SK-N-SH (cell line): ENCODE measurements at regions of chr7 and their contacts with region 1.

Region 1: DNA sequence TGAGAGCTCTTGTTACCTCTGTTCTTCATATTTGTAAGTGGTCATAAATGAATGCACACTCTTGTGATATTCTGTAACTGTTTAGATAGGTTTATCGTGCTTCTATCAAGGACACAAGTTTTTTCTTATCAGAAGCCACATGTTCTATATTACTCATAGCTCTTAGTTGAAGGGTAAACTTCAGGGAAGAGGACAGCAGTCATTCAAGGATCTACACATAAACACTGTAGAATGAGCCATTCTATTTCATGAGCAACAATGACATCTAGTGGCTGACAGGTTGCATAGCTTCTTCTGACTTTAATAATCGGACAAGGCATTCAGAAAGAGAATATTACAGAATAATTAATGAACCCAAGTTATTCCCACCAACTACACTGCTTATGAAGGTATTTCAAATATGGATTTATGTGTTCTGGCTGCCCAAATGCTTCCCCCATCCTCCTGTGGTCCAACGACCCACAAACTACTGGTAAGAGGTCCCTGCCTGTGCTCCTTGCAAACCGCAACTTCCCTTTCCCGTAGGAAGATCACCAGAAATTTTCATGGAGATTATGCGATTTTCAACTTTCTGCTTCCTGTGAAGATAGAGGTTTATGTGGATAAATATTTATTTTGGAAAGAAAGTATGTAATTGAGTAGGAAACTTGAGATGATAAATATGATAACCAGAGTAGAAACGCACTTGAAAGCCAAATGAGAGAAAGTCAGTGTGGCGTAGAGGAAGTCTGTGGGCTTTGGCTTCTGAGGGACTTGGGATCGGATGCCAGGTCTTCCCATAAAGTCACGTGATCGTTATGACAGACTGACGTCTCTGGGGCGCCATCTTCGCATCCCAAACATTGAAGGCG is 16.8 kb upstream of the ABCB5 start:
- DNase-seq: peak; percentile 59
- H3K4me3 ChIP-seq: no peak overlapping the region; a peak in 1 of 4 replicates
- H3K27ac ChIP-seq: no peak overlapping the region
- H3K4me1 ChIP-seq: peaks cover 0 to 2% of the 10 kb centered on the region in 2 experiments; a peak in 2 of 4 replicates
- H3K27me3 ChIP-seq: no peaks in the 10 kb centered on the region
- CTCF ChIP-seq: peak; percentile 97
- EP300 ChIP-seq: no peak; a peak in 1 of 4 replicates
- RAD21 ChIP-seq: peak; percentile 100

Region 2: GRCh38 chr7:19747740-19748339 is 850.8 kb before region 1 on chr7:
- CTCF ChIA-PET with region 1: interaction called, 77 read pairs
- POLR2A ChIA-PET with region 1: no interaction called
- DNase-seq: peak; percentile 47
- H3K4me3 ChIP-seq: no peak overlapping the region
- H3K27ac ChIP-seq: no peak overlapping the region
- H3K4me1 ChIP-seq: no peaks in the 10 kb centered on the region
- H3K27me3 ChIP-seq: no peaks in the 10 kb centered on the region; the same call in 1 of the 2 replicates
- CTCF ChIP-seq: peak; percentile 86
- EP300 ChIP-seq: no peak
- RAD21 ChIP-seq: peak; percentile 78

Region 3: GRCh38 chr7:20158684-20159083 is 440.0 kb before region 1 on chr7:
- CTCF ChIA-PET with region 1: interaction called, 56 read pairs
- POLR2A ChIA-PET with region 1: no interaction called
- DNase-seq: no peak
- H3K4me3 ChIP-seq: no peak overlapping the region
- H3K27ac ChIP-seq: no peak overlapping the region
- H3K4me1 ChIP-seq: no peaks in the 10 kb centered on the region
- H3K27me3 ChIP-seq: no peaks in the 10 kb centered on the region
- CTCF ChIP-seq: peak; percentile 60
- EP300 ChIP-seq: no peak
- RAD21 ChIP-seq: peak; percentile 71

Region 4: DNA sequence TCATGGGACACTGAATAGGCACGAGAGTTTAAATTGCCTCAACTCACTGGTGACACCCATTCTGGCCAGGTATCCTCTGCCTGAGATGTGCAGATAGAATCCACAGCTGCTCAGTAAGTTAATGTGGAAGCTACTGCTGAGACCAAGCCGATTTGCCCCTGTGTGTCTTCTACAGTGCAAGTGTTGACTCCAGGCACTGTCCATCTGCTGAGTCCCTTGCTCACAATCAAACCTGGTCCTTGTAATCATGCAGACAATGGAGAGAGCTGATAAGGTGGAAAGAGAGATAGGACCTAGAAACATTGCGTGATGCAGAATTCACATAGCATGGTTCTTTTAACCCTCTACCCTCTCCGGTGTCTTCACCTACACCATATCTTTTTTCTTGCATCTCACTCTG is 166.6 kb before region 1 on chr7:
- CTCF ChIA-PET with region 1: interaction called, 10 read pairs
- POLR2A ChIA-PET with region 1: no interaction called
- DNase-seq: no peak
- H3K4me3 ChIP-seq: no peak overlapping the region
- H3K27ac ChIP-seq: no peak overlapping the region
- H3K4me1 ChIP-seq: peaks cover 0 to 20% of the 10 kb centered on the region in 2 experiments; a peak in 2 of 4 replicates
- H3K27me3 ChIP-seq: no peaks in the 10 kb centered on the region
- CTCF ChIP-seq: no peak
- EP300 ChIP-seq: no peak
- RAD21 ChIP-seq: no peak

Region 5: DNA sequence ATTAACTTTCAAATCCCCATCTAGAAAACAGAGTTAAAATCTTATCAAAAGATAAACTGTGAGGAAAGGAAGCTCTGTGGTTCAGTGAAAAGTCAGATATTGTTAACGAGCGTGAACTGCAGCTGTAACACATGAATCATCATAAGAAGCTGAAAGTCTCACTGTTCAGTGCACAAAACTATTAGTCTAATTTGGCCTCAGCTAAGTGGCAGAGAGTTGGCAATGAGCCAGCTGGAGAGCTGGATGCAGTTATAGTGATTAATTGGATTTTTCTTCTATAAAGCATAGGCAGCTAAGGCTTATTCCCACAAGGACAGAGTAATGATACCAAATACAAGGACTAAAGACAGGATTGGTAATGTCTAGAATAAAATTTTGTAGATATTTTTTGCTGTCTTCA is 84.3 kb before region 1 on chr7:
- CTCF ChIA-PET with region 1: interaction called, 12 read pairs
- POLR2A ChIA-PET with region 1: no interaction called
- DNase-seq: peak; percentile 58
- H3K4me3 ChIP-seq: no peak overlapping the region
- H3K27ac ChIP-seq: peak overlapping the region in 1 of 2 experiments; percentile 65; a peak in 2 of 4 replicates
- H3K4me1 ChIP-seq: peaks cover 0 to 12% of the 10 kb centered on the region in 2 experiments; a peak in 2 of 4 replicates
- H3K27me3 ChIP-seq: no peaks in the 10 kb centered on the region
- CTCF ChIP-seq: no peak
- EP300 ChIP-seq: peak in 1 of 2 experiments; percentile 98; a peak in 2 of 4 replicates
- RAD21 ChIP-seq: peak; percentile 49

Region 6: GRCh38 chr7:20624666-20625385 is 26.1 kb after region 1 on chr7:
- CTCF ChIA-PET with region 1: interaction called, 16 read pairs
- POLR2A ChIA-PET with region 1: no interaction called
- DNase-seq: no peak
- H3K4me3 ChIP-seq: no peak overlapping the region
- H3K27ac ChIP-seq: no peak overlapping the region
- H3K4me1 ChIP-seq: no peaks in the 10 kb centered on the region
- H3K27me3 ChIP-seq: no peaks in the 10 kb centered on the region
- CTCF ChIP-seq: no peak
- EP300 ChIP-seq: no peak
- RAD21 ChIP-seq: no peak